B cell (primary cell): ENCODE measurements at regions of chrX and their contacts with region 1.

Region 1: GRCh38 chrX:10119399-10119990 is 37.3 kb upstream of the CLCN4 start:
- DNase-seq: peak; percentile 86
- ATAC-seq: peak; percentile 56
- H3K4me3 ChIP-seq: no peak overlapping the region
- H3K4me3 Mint-ChIP-seq: peak overlapping the region; percentile 65
- H3K27ac ChIP-seq: peak overlapping the region in 1 of 2 donors; percentile 55
- H3K27ac Mint-ChIP-seq: peak overlapping the region; percentile 96
- H3K4me1 ChIP-seq: peaks cover 70 to 90% of the 10 kb centered on the region in 2 donors
- H3K4me1 Mint-ChIP-seq: peaks cover 69% of the 10 kb centered on the region
- H3K27me3 ChIP-seq: no peaks in the 10 kb centered on the region
- H3K27me3 Mint-ChIP-seq: no peaks in the 10 kb centered on the region
- CTCF ChIP-seq: peak; percentile 98

Region 2: DNA sequence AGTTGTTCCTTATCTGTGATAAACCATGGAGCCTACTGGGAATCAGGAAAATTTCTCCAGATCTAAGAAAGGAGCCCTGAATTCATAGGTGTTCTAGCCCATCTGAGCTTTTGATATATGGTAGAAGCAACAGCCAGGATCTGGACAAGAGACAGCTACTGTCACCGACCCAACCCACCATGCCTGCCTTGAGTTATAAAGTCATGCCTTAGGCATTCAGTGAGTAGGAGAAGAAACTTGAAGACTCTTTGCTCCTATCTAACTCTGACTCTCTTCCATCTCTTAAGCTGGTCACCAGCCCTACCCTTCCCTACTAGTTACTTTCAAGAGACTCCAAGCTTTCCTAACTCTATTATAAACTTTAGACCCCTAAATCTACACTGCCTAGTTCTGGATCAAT is 1001.6 kb before region 1 on chrX:
- CTCF ChIA-PET with region 1: no interaction called
- POLR2A ChIA-PET with region 1: no interaction called
- intact Hi-C with region 1: no loop called
- DNase-seq: no peak
- ATAC-seq: no peak
- H3K4me3 ChIP-seq: no peak overlapping the region
- H3K4me3 Mint-ChIP-seq: no peak overlapping the region
- H3K27ac ChIP-seq: no peak overlapping the region
- H3K27ac Mint-ChIP-seq: no peak overlapping the region
- H3K4me1 ChIP-seq: no peaks in the 10 kb centered on the region
- H3K4me1 Mint-ChIP-seq: no peaks in the 10 kb centered on the region
- H3K27me3 ChIP-seq: peaks cover 0 to 2% (median 0%) of the 10 kb centered on the region in 4 experiments
- H3K27me3 Mint-ChIP-seq: peaks cover 17% of the 10 kb centered on the region
- CTCF ChIP-seq: no peak

Region 3: DNA sequence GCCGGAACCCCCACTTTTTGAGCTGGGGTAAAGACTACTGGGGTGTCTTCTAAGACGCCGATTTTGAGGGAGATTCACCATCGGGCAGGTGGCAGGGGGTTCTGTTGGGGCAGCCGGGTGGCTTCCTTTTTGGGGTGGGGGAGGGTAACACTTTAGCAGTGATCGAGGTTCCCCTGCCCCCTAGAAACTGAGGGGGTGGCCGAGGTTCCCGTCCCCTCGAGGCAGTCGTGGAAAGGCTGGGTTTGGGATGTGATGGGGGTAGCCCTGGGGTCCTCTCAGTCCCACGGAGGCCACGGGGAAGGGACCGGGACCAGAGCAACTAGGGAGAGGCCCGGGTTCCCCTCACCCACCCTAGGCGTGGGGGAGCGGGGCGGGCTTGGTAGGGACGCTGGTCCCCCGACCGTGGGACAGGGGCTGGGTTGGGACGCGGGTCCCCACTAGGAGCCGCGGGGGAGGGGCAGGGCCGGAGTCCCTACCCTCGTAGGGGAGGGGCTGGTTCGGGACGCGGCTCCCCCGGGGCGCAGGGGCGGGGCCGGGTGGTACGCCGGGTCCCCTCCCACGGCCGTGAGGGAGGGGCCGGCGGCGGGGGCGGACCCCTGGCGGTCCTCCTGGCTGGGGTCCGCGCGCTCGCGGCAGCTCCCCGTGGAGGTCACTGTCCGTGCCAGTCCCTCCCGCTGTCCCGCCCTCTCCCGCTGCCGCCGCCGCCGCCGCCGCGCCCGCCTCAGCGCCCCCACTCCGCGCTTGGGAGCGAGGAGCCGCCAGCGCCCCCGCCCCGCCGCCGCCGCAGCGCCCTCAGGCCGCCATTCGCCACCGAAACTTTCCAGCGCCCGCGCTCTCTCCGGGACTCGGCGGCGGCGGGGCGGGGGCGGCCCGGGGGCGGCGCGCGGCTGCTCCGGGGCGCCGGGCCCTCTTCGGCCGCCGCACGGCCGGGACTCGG is 654.8 kb before region 1 on chrX and contains the start of gene TBL1X:
- CTCF ChIA-PET with region 1: no interaction called
- POLR2A ChIA-PET with region 1: no interaction called
- intact Hi-C with region 1: loop called (anchors 10 kb)
- DNase-seq: peak; percentile 65
- ATAC-seq: peak; percentile 70
- H3K4me3 ChIP-seq: peak within 1 kb of the TSS in 4 of 5 experiments; percentile 60 to 73 (median 69)
- H3K4me3 Mint-ChIP-seq: peak within 1 kb of the TSS; percentile 78
- H3K27ac ChIP-seq: peak within 1 kb of the TSS; percentile 18 to 61
- H3K27ac Mint-ChIP-seq: peak within 1 kb of the TSS; percentile 77
- H3K4me1 ChIP-seq: peaks cover 33 to 43% of the 10 kb centered on the region in 2 donors
- H3K4me1 Mint-ChIP-seq: peaks cover 45% of the 10 kb centered on the region
- H3K27me3 ChIP-seq: no peaks in the 10 kb centered on the region
- H3K27me3 Mint-ChIP-seq: no peaks in the 10 kb centered on the region
- CTCF ChIP-seq: no peak
- total RNA-seq, gene TBL1X: 61.3 and 65.1 TPM in 2 replicates

Region 4: DNA sequence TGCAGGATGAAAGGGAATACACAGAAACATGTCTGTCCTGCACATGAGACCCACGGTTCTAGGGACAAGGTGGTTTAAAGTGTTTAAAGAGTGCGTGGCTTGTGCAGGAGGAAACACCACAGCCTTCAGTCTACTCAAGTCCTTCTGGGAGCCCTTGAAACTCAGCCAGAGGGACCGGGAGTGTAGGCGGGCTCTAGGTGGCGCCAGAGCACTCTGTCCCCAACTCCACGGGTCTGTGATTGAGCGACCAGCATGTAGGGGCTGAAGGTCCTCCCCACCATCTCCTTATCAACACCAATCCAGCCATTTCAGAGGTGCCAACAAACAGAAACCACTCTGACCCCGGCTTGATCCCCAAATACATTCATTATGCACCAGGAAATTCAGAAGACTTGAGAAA is 234.3 kb before region 1 on chrX:
- CTCF ChIA-PET with region 1: interaction called, 13 read pairs
- POLR2A ChIA-PET with region 1: no interaction called
- intact Hi-C with region 1: no loop called
- DNase-seq: peak; percentile 67
- ATAC-seq: peak; percentile 72
- H3K4me3 ChIP-seq: no peak overlapping the region
- H3K4me3 Mint-ChIP-seq: no peak overlapping the region
- H3K27ac ChIP-seq: no peak overlapping the region
- H3K27ac Mint-ChIP-seq: no peak overlapping the region
- H3K4me1 ChIP-seq: peaks cover 0 to 4% of the 10 kb centered on the region in 2 donors
- H3K4me1 Mint-ChIP-seq: peaks cover 2% of the 10 kb centered on the region
- H3K27me3 ChIP-seq: no peaks in the 10 kb centered on the region
- H3K27me3 Mint-ChIP-seq: no peaks in the 10 kb centered on the region
- CTCF ChIP-seq: peak; percentile 56

Region 5: DNA sequence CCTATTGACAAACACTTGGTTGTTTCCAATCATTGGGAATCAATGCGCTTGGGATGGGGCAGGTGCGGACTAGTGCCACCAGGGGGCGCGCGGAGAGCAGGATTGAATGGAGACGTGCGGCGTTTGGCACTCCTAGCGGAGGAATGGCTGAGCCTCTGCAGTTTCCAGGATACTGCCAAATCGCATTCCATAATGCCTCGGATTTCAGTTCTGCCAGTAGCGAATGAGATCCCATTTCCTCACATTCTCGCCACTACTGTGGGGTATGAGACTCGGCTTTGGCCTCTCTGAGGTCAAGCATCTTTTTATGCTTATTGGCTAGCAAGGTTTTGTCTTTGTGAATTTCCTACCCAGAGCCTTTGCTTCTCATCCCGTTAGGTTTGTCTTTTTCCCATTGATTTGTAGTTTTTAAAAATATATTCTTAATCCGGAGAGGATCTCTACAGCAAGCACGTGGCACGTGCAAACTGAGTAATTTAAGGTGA is 123.6 kb before region 1 on chrX:
- CTCF ChIA-PET with region 1: interaction called, 160 read pairs
- POLR2A ChIA-PET with region 1: no interaction called
- intact Hi-C with region 1: loop called (anchors 1 kb)
- DNase-seq: peak; percentile 77
- ATAC-seq: peak; percentile 76
- H3K4me3 ChIP-seq: no peak overlapping the region
- H3K4me3 Mint-ChIP-seq: no peak overlapping the region
- H3K27ac ChIP-seq: no peak overlapping the region
- H3K27ac Mint-ChIP-seq: no peak overlapping the region
- H3K4me1 ChIP-seq: peaks cover 0 to 6% of the 10 kb centered on the region in 2 donors
- H3K4me1 Mint-ChIP-seq: peaks cover 11% of the 10 kb centered on the region
- H3K27me3 ChIP-seq: no peaks in the 10 kb centered on the region
- H3K27me3 Mint-ChIP-seq: no peaks in the 10 kb centered on the region
- CTCF ChIP-seq: peak; percentile 91

Region 6: DNA sequence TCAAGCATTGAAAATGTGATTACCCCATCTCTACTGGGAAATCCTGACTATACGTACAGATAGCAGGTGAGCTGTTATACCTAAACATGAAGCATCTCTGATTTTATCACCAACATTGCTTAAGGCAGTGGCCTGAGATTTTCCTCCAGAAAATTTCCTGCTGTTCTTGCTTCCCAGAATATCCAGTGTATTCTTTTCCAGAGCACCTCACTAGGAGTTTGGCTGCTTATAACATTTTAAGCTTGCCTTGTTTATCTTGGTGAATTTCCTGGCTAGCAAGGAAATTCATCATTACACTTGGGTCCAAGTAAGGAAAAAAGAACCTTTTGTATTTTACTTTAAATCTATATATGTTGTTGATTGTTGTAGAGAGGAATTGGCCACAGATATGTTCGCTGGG is 35.7 kb before region 1 on chrX:
- CTCF ChIA-PET with region 1: interaction called, 47 read pairs
- POLR2A ChIA-PET with region 1: no interaction called
- intact Hi-C with region 1: loop called (anchors 2 kb)
- DNase-seq: no peak
- ATAC-seq: no peak
- H3K4me3 ChIP-seq: peak overlapping the region in 1 of 5 experiments; percentile 41
- H3K4me3 Mint-ChIP-seq: peak overlapping the region; percentile 80
- H3K27ac ChIP-seq: peak overlapping the region; percentile 76 to 78
- H3K27ac Mint-ChIP-seq: peak overlapping the region; percentile 60
- H3K4me1 ChIP-seq: peaks cover 25 to 40% of the 10 kb centered on the region in 2 donors
- H3K4me1 Mint-ChIP-seq: peaks cover 52% of the 10 kb centered on the region
- H3K27me3 ChIP-seq: no peaks in the 10 kb centered on the region
- H3K27me3 Mint-ChIP-seq: no peaks in the 10 kb centered on the region
- CTCF ChIP-seq: no peak

Region 7: DNA sequence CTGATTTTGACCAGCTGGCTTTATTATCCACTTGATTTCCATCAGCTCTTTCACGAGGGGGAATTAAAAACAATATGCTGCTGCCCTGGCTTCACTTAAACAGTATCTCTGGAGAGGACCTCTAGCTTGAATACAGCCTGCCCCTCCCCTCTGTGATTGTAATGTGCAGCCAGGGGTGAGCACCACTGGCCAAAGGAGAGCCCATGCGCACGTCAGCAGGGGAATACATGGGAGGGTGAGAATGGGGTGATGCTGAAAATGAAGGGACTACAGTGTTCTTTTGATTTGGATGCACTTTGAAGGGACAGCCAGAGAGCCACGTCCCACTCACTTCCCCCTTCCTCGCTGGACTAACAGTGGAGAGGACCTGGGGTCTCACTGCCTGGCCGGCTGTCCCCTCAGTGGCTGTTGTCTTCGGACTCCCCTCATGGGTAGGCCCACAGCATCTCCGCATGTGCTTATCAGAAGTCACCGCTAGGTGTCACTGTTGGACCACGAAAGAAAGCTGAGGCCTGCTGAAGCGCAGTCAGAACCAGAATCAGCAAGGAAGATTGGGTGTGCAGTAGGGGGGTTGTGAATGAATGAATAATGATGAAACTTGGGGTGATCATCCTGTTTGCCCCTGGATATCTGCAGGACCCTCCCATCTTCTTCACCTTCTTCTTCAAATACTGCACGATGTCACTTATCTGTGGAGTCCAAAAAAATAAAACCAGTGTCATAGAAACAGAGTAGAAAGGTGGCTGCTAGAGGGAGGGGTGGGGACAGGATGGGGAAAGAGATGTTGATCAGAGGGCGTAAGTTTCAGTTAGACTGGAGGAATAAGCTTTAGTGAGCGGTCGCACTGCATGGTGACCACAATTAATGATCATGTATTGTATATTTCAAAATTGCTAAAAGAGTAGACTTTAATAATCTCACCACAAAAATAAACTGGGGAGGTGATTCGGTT is 70.1 kb after region 1 on chrX:
- CTCF ChIA-PET with region 1: interaction called, 17 read pairs
- POLR2A ChIA-PET with region 1: no interaction called
- intact Hi-C with region 1: no loop called
- DNase-seq: peak; percentile 80
- ATAC-seq: peak; percentile 76
- H3K4me3 ChIP-seq: no peak overlapping the region
- H3K4me3 Mint-ChIP-seq: no peak overlapping the region
- H3K27ac ChIP-seq: no peak overlapping the region
- H3K27ac Mint-ChIP-seq: peak overlapping the region; percentile 32
- H3K4me1 ChIP-seq: no peaks in the 10 kb centered on the region
- H3K4me1 Mint-ChIP-seq: peaks cover 14% of the 10 kb centered on the region
- H3K27me3 ChIP-seq: no peaks in the 10 kb centered on the region
- H3K27me3 Mint-ChIP-seq: no peaks in the 10 kb centered on the region
- CTCF ChIP-seq: peak; percentile 51